AG04449 (cell line): ENCODE measurements at regions of chr12 and their contacts with region 1.

Region 1: DNA sequence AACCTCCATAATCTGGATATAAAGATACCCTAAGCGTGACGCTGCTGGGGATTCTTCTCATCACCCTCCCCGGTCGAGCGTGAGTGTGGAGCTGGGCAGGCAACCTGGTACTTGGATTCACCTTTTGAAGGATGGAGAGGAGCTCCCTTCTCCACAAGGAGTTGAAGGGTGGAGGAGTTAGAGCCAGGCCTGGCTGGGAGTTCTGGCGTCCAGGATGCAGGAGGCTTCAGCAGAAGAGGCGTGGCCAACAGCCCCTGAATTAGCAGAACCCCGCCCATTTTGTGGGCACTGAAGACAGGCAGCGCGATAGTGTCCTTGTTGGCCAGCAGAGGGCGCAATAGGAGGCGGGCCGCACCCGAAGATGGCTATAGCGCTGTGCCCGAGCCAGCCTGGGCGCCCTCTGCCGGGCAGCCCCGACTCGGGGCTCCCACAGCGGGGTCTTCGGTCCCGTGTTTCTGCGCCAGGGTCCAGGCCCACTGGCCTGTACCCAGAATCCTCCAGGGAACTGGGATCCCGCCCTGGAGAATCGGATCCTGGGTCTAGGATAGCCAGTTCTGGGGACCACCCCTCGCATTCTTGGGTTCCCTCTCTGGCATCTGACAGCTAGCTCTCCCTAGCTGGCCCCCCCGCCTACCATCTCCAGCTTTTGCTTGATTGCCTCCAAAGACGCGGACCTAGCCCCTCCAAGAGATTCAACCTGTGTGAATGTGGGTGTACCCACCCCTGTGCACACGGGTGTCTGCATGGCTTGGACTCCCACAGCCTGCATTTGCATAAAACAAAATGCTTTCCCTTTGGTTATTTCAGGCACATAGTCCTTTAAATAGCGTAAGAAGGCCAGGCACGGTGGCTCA is 26.0 kb upstream of the SMUG1 start:
- DNase-seq: no peak
- H3K4me3 ChIP-seq: peak overlapping the region; percentile 36
- CTCF ChIP-seq: peak; percentile 99

Region 2: DNA sequence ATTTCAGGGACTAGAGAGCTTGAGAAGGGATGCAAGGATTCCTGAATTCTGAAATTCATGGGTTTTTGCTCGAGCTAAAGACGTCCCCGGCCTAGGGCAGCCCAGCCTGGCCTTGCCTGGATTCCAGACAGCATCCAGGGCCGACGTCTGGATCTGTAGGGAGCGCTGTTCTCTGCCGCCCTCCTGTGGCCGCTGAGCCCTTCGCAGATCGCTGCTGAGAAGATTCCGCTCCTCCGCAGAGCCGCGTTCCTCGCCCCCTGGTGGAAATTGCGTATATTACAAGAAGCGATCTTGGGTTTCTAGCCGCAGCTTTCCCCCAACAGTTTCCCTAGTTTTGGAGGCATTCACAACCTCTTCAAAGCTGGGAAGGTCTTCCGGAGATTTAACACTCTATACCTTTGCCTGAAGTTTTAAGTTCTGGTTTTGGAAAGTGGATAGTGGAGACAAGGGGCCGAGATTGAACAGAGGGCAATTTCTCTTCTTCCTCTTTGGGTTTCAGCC is 468.1 kb before region 1 on chr12:
- CTCF ChIA-PET with region 1: interaction called, 43 read pairs
- POLR2A ChIA-PET with region 1: no interaction called
- DNase-seq: no peak
- H3K4me3 ChIP-seq: no peak overlapping the region
- CTCF ChIP-seq: peak; percentile 100

Region 3: GRCh38 chr12:53984901-53985709 is 229.7 kb before region 1 on chr12 and contains the start of gene HOXC10:
- CTCF ChIA-PET with region 1: interaction called, 401 read pairs
- POLR2A ChIA-PET with region 1: interaction called, 5 read pairs
- DNase-seq: peak; percentile 89
- H3K4me3 ChIP-seq: peak within 1 kb of the TSS; percentile 96
- CTCF ChIP-seq: peak; percentile 92

Region 4: DNA sequence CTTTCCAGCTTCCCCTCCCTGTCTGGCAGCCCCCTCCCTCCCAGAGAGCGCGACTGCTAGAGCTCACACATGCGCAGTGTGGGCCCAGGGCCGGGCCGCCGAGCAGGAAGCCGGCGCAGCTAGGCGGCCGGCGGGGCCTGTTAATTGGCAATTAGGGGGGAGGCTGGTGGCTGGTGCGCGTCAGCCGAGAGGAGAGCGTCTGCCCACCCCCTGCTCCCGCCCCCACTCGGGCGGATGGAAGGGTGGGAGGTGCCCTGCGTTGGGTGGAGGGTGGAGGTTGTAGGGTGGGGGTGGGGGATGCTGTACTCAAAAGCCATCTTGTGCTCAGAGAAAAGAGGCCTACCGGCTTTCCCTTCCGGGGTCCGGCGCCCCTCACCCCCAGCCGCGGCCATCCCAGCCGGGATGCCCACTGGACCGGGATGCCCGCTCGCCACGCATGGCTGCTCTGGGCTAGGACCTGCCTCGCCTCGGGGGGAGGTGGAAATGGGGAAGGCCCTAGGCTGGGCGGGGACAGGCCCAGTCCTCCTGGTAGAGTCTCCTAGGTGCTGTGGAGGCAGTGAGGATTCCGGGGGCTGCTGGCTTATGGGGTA is 196.8 kb before region 1 on chr12:
- CTCF ChIA-PET with region 1: interaction called, 908 read pairs
- POLR2A ChIA-PET with region 1: no interaction called
- DNase-seq: peak; percentile 82
- H3K4me3 ChIP-seq: peak overlapping the region; percentile 88
- CTCF ChIP-seq: no peak

Region 5: GRCh38 chr12:54240971-54241588 is 26.3 kb after region 1 on chr12:
- CTCF ChIA-PET with region 1: interaction called, 14 read pairs
- POLR2A ChIA-PET with region 1: no interaction called
- DNase-seq: no peak
- H3K4me3 ChIP-seq: no peak overlapping the region
- CTCF ChIP-seq: no peak

Region 6: DNA sequence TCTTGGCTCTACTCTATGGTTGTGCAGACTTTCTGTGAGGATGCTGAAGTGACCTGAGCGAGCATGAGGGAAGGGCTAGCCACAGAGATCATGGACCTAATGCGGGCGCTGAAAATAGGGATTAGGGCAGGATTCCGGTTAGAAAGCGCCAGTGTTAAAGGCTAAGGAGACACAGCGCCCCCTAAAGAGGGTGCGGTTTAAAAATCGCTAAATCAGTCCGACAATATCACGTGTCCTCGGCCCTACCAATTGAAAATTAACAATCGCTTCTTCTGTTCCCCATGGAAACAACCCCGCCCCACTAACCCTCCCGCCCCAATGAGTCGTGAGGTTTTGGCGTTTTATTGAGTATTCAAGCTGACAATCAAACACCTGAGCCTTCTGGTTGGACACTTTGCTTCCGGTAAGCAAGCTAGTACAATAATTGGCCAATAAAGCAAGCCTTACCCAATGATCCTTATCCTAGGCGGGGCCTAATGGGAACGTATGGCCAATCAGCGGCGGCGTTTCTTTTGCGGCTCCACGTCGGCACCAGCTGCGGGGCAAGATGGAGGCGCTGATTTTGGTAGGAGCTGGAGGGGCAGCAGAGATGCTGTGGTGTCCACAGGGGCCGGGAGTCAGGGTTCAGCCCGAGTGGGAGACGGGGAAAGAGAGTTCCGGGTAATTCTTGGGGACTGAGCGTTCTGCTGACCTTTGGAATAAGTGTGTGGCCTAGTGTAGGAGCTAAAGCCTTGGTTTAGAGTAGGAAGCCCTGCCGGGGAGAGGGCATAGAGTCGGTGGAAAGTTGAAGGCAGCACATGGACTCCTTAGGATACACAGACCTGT is 110.0 kb after region 1 on chr12 and contains the start of gene COPZ1:
- CTCF ChIA-PET with region 1: interaction called, 28 read pairs
- POLR2A ChIA-PET with region 1: no interaction called
- DNase-seq: peak; percentile 100
- H3K4me3 ChIP-seq: peak within 1 kb of the TSS; percentile 96
- CTCF ChIP-seq: peak; percentile 83

Region 7: DNA sequence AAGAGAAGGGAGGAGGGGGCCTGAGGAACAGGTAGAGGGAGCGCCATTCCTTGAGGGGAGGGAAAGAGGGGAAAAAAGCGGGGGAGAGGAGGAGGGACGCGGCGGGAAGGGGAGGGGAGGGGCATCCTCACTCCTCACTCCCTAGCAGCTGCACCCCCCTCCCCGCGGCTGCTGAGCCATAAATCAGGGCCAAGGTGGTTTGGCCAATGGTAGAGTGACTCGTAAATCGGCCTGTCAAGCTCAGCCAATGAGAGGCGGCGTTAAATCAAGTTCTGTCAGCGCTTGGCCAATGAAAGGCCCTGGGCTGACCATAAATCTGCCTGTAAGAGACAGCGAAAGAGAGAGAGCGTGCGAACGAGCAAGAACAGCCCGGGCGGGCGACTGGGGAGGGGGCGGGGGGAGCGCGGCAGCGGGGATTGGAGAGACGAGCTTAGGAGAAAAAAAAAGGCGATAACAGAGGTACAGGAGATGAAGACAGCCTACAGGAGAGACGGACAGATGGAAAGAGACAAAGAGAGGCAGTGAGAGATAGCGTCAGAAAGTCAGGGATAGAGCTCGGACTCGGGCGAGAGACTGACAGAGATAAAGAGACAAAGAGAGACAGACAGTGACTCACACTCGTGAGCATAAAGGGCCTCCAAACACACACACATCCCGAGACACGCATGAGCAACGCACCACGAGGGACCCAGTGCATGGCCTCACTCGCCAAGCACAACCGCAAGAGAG is 144.4 kb after region 1 on chr12:
- CTCF ChIA-PET with region 1: interaction called, 98 read pairs
- POLR2A ChIA-PET with region 1: no interaction called
- DNase-seq: peak; percentile 97
- H3K4me3 ChIP-seq: peak overlapping the region; percentile 59
- CTCF ChIP-seq: no peak

Region 8: DNA sequence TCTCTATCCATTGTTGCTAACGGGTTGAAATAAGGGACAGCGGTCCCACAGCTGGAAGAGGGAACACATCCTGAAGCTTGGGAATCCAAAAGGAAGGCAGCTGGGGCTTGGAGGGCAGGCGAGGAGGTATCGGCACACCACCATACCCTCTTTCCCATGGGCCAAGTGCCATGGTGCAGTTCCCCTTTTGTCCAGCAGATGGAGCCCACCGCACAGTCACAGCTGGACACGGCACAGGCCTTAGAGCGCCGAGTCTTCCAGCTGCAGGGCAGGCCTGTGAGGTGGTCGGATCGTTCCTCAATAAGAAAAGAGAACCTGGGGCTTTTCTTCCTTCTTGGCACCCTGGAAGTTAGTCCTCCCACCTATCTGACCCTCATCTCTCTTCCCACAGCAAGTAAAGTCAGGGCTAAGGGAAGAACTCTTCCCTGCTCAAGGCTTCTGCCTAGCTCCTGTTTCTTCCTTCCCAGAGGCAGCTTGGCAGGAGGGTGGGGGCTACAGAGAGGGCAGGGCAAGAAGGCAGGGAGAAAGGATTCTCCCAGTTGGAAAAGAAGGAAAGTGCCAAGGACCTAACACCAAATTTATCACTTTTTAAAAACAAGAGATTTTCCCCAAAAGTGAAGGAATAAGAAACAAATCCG is 365.0 kb after region 1 on chr12:
- CTCF ChIA-PET with region 1: no interaction called
- POLR2A ChIA-PET with region 1: no interaction called
- DNase-seq: no peak
- H3K4me3 ChIP-seq: no peak overlapping the region
- CTCF ChIP-seq: peak; percentile 99